Caco-2 (cell line): ENCODE measurements at regions of chr10 and their contacts with region 1.

Region 1: DNA sequence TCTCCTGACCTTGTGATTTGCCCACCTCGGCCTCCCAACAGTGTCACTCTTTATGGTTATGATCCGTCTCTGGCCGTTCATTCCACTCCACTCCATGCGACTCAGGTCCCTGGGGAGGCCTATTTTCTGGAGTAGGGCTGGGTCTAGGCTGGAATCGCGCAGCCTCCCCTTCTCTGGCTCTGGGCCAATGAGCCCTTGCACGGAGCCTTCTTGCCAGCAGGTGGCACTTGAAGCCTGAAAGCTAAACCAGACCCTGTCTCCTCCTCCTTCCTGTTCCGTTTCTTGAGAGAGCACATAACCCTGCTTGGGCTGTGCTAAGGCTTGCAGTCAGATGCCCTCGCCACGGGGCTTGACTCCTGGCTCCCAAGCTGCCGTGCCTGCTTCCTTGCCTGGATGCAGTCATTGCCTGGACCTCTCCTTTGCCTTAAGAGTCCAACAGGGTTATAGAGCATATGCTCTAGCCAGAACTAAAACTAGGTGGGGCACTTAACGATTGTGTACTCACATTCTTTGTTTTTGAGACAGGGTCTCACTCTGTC is 9.6 kb upstream of the DNAJB12 start:
- DNase-seq: peak; percentile 90 to 92
- H3K4me3 ChIP-seq: no peak overlapping the region
- H3K4me3 Mint-ChIP-seq: peak overlapping the region; percentile 23
- H3K27ac Mint-ChIP-seq: peak overlapping the region; percentile 75
- H3K4me1 ChIP-seq: peaks cover 17% of the 10 kb centered on the region
- H3K4me1 Mint-ChIP-seq: peaks cover 9% of the 10 kb centered on the region
- H3K27me3 ChIP-seq: no peaks in the 10 kb centered on the region
- H3K27me3 Mint-ChIP-seq: no peaks in the 10 kb centered on the region
- CTCF ChIP-seq: peak; percentile 98 to 99

Region 2: DNA sequence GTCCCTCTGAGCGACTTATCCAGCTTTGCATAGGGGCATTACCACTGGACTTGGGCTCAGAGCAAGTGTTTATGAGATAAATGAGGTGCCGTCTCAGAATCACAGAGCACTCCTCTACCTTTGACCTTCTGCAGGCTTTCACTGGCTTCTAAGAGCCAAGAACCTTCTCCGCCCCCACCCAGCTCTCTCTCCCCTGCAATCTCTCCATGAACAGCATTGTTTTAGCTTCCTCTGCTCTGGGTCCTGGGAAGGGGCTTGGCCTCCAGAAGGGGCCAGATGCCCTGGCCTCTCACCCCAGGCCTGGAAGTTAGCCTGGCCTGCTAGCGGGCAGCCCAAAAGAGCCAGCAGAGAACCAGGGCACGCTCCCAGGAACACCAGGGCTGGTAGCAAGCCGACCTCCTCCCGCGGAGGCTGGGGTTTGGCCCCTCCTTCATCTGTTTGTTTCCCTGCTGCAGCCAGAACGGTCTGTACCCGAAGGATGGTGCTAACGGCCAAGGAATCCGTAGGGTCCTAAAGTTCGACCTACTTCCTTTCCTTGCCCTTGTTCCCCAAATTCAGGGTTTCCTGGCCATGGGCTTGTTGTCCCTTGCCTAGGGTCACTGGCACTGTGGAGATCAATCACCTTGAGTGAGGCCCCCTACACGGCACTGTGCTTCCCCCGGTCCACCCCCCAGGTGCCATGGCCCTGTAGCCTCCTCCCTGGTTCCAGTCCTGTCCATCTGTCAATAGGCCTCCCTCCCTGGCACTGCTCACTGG is 109.3 kb before region 1 on chr10:
- CTCF ChIA-PET with region 1: no interaction called
- POLR2A ChIA-PET with region 1: no interaction called
- intact Hi-C with region 1: no loop called
- DNase-seq: peak; percentile 54 to 59
- H3K4me3 ChIP-seq: no peak overlapping the region
- H3K4me3 Mint-ChIP-seq: no peak overlapping the region
- H3K27ac Mint-ChIP-seq: peak overlapping the region; percentile 87
- H3K4me1 ChIP-seq: peaks cover 16% of the 10 kb centered on the region
- H3K4me1 Mint-ChIP-seq: peaks cover 23% of the 10 kb centered on the region
- H3K27me3 ChIP-seq: no peaks in the 10 kb centered on the region
- H3K27me3 Mint-ChIP-seq: no peaks in the 10 kb centered on the region
- CTCF ChIP-seq: no peak

Region 3: GRCh38 chr10:72567884-72568640 is 203.8 kb after region 1 on chr10:
- CTCF ChIA-PET with region 1: interaction called, 7 read pairs
- POLR2A ChIA-PET with region 1: no interaction called
- intact Hi-C with region 1: loop called (anchors 2 kb)
- DNase-seq: peak in 1 of 2 experiments; percentile 41
- H3K4me3 ChIP-seq: no peak overlapping the region
- H3K4me3 Mint-ChIP-seq: no peak overlapping the region
- H3K27ac Mint-ChIP-seq: no peak overlapping the region
- H3K4me1 ChIP-seq: no peaks in the 10 kb centered on the region
- H3K4me1 Mint-ChIP-seq: no peaks in the 10 kb centered on the region
- H3K27me3 ChIP-seq: no peaks in the 10 kb centered on the region
- H3K27me3 Mint-ChIP-seq: no peaks in the 10 kb centered on the region
- CTCF ChIP-seq: peak; percentile 61 to 64

Region 4: GRCh38 chr10:72625608-72626443 is 261.5 kb after region 1 on chr10 and contains the start of gene MICU1:
- CTCF ChIA-PET with region 1: no interaction called
- POLR2A ChIA-PET with region 1: no interaction called
- intact Hi-C with region 1: loop called (anchors 5 kb)
- DNase-seq: peak; percentile 98
- H3K4me3 ChIP-seq: peak within 1 kb of the TSS; percentile 59
- H3K4me3 Mint-ChIP-seq: peak within 1 kb of the TSS; percentile 75
- H3K27ac Mint-ChIP-seq: peak within 1 kb of the TSS; percentile 80
- H3K4me1 ChIP-seq: peaks cover 13% of the 10 kb centered on the region; the same call in 1 of the 2 replicates
- H3K4me1 Mint-ChIP-seq: peaks cover 8% of the 10 kb centered on the region
- H3K27me3 ChIP-seq: no peaks in the 10 kb centered on the region
- H3K27me3 Mint-ChIP-seq: no peaks in the 10 kb centered on the region
- CTCF ChIP-seq: no peak
- total RNA-seq, gene MICU1: 68.8 and 83.2 TPM in 2 replicates

Region 5: GRCh38 chr10:72834183-72834825 is 470.0 kb after region 1 on chr10:
- CTCF ChIA-PET with region 1: interaction called, 19 read pairs
- POLR2A ChIA-PET with region 1: no interaction called
- intact Hi-C with region 1: loop called (anchors 1 kb)
- DNase-seq: peak; percentile 53 to 72
- H3K4me3 ChIP-seq: no peak overlapping the region
- H3K4me3 Mint-ChIP-seq: no peak overlapping the region
- H3K27ac Mint-ChIP-seq: no peak overlapping the region
- H3K4me1 ChIP-seq: no peaks in the 10 kb centered on the region
- H3K4me1 Mint-ChIP-seq: peaks cover 13% of the 10 kb centered on the region
- H3K27me3 ChIP-seq: no peaks in the 10 kb centered on the region
- H3K27me3 Mint-ChIP-seq: no peaks in the 10 kb centered on the region
- CTCF ChIP-seq: peak; percentile 73 to 81

Region 6: DNA sequence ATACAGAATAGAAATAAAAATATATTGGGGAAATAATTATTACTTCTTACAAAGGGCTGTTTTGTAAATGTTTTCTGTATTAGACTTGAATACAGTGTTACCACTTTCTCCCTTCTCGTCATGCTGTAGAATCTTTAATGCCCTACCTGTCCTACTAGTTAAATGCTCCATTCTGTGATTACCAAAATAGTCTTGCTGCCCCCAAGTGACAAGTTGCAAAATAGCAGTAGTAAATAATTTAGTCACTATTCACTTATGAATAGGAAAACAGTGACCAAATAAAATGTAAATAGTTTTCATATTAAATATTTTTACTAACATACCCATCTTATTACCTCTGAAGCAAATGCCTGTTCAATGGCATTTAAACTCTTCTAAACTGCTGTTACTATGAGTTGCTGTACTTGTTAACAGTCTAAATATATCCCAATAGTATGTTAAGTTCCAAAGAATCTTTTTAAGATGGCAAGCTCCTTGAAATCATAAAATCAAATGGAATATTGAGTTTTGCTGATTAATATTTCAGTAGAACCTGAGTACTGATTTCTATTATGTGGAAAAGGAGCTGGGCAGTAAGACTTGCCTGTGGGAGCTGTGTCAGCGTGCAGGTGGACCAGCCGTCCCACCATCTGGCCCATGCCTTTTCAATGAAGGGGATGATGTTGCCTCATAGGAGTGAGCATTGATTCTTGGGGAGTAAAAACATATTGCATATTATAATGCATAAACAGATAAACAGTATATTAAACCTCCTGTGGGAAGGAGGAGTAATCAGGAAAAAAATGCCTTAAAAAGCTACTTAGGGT is 511.1 kb after region 1 on chr10:
- CTCF ChIA-PET with region 1: interaction called, 4 read pairs
- POLR2A ChIA-PET with region 1: no interaction called
- intact Hi-C with region 1: loop called (anchors 1 kb)
- DNase-seq: peak in 1 of 2 experiments; percentile 56
- H3K4me3 ChIP-seq: no peak overlapping the region
- H3K4me3 Mint-ChIP-seq: no peak overlapping the region
- H3K27ac Mint-ChIP-seq: no peak overlapping the region
- H3K4me1 ChIP-seq: no peaks in the 10 kb centered on the region
- H3K4me1 Mint-ChIP-seq: no peaks in the 10 kb centered on the region
- H3K27me3 ChIP-seq: no peaks in the 10 kb centered on the region
- H3K27me3 Mint-ChIP-seq: no peaks in the 10 kb centered on the region
- CTCF ChIP-seq: peak; percentile 67 to 69